ENCODE measurements at regions of chr1 and their contacts with region 1.

Region 1: DNA sequence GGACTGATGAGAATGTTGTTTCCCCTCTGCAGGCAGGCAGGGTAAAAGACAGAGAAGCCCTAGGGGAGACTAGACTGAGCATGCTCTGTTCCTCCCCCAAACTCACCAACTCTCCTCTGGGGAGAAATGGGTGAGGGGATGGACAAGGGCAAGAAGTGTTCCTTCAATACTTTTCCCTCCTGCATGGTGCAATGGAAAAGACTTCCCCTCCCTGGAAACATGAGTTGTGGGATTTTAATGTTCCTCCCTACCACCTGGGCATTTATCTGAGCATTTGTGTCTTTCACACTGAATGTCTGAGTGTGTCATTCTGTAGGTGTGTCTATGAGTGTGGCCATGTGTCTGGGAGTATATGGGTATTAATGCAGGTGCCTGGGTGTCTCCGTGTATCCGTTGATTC is 275.7 kb downstream of the C1orf94 start:
- DNase-seq: no peak
- ATAC-seq: no peak

Region 2: DNA sequence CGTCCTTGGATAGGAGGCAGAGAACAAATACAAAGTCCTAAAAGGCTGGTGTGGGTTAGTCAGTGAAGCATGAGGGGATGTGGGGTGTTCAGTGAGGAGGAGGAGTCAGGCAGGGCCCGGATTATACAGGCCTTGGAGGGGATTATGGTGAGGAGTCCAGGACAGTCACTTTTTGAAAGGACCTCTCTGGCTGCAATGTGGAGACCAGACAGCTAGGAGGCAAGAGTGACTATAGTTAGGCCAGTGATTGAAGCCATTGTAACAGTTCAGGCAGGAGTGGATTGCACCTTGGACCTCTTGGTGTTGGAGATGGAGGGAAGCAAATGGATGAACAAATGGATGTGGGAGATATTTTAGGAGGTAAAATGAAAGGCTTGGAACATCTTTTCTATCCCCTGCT is 160.0 kb before region 1 on chr1:
- intact Hi-C with region 1: no loop called
- DNase-seq: no peak
- ATAC-seq: no peak

Region 3: GRCh38 chr1:34406833-34407539 is 45.5 kb before region 1 on chr1:
- intact Hi-C with region 1: no loop called
- DNase-seq: no peak
- ATAC-seq: no peak

Region 4: DNA sequence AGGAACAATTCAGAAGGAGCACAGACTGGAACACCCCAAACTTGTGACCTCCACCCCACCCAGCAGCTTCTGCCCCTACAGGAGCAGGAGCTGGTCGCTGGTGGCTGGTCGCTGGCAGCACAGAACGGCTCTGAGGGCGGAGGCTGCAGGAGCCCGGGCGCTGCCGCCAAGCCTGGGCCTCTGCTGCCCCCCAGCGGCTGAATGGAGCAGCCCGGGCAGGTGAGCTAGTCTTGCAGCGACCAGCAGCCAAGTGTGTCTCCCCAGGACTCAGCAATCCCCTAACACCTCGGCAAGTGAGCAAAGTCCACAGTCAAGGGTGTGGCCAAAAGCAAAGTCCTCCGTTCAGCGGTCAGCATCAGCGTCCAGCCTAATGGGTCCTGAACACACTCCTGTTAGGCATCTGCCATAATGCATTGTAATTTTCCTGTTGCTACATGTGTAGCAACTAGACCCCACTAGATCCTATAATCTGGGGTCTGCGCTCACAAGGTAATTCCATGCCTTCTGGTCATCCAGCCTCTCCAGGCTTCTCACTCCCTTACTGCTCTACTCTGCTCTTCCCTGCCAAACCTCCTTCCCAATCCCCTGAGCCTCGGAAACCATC is 290.3 kb after region 1 on chr1:
- intact Hi-C with region 1: loop called (anchors 10 kb)
- DNase-seq: peak; percentile 81
- ATAC-seq: peak; percentile 83